Activated naive CD4-positive, alpha-beta T cell treated with anti-CD3 and anti-CD28 coated beads for 36 hours (primary cell): ENCODE measurements at regions of chr19 and their contacts with region 1.

Region 1: GRCh38 chr19:12333162-12334159 is at the start of gene ZNF563:
- DNase-seq: peak; percentile 100
- H3K4me3 Mint-ChIP-seq: peak within 1 kb of the TSS; percentile 97
- H3K27ac Mint-ChIP-seq: peak within 1 kb of the TSS; percentile 96
- H3K4me1 Mint-ChIP-seq: peaks cover 36% of the 10 kb centered on the region
- H3K27me3 Mint-ChIP-seq: no peaks in the 10 kb centered on the region
- total RNA-seq, gene ZNF563: 3.0 to 4.1 TPM

Region 2: GRCh38 chr19:12162882-12163806 is 170.3 kb before region 1 on chr19 and contains the start of gene ZNF136:
- CTCF ChIA-PET with region 1: no interaction called
- intact Hi-C with region 1: loop called (anchors 2 kb)
- DNase-seq: peak; percentile 99
- H3K4me3 Mint-ChIP-seq: peak within 1 kb of the TSS; percentile 90
- H3K27ac Mint-ChIP-seq: peak within 1 kb of the TSS; percentile 91
- H3K4me1 Mint-ChIP-seq: peaks cover 42% of the 10 kb centered on the region
- H3K27me3 Mint-ChIP-seq: no peaks in the 10 kb centered on the region
- total RNA-seq, gene ZNF136: 8.4 to 11.6 TPM

Region 3: GRCh38 chr19:12294249-12295158 is 39.0 kb before region 1 on chr19 and contains the start of gene ZNF44:
- CTCF ChIA-PET with region 1: interaction called, 6 read pairs
- intact Hi-C with region 1: loop called (anchors 1 kb)
- DNase-seq: peak; percentile 99
- H3K4me3 Mint-ChIP-seq: peak within 1 kb of the TSS; percentile 98
- H3K27ac Mint-ChIP-seq: peak within 1 kb of the TSS; percentile 96
- H3K4me1 Mint-ChIP-seq: peaks cover 31% of the 10 kb centered on the region
- H3K27me3 Mint-ChIP-seq: no peaks in the 10 kb centered on the region
- total RNA-seq, gene ZNF44: 5.9 to 6.3 TPM

Region 4: DNA sequence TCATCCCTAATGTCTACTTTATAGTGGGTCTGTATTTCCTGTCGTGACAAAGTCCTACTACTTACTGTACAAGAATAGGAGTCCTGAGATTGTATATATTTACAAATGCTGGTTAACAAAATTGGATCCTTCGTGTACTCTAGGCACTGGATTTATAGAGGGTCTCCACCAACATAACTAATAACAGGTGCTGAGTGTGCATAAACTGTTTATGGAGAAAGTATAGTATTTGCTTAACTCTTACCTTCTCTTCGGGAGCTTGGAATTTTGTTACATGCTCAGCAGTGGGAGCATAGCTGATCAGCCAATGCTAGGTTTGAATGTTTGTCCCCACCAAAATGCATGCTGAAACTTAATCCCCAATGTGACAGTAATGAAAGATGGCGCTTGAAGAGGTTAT is 19.9 kb after region 1 on chr19:
- CTCF ChIA-PET with region 1: no interaction called
- intact Hi-C with region 1: no loop called
- DNase-seq: no peak
- H3K4me3 Mint-ChIP-seq: no peak overlapping the region
- H3K27ac Mint-ChIP-seq: no peak overlapping the region
- H3K4me1 Mint-ChIP-seq: no peaks in the 10 kb centered on the region
- H3K27me3 Mint-ChIP-seq: no peaks in the 10 kb centered on the region

Region 5: DNA sequence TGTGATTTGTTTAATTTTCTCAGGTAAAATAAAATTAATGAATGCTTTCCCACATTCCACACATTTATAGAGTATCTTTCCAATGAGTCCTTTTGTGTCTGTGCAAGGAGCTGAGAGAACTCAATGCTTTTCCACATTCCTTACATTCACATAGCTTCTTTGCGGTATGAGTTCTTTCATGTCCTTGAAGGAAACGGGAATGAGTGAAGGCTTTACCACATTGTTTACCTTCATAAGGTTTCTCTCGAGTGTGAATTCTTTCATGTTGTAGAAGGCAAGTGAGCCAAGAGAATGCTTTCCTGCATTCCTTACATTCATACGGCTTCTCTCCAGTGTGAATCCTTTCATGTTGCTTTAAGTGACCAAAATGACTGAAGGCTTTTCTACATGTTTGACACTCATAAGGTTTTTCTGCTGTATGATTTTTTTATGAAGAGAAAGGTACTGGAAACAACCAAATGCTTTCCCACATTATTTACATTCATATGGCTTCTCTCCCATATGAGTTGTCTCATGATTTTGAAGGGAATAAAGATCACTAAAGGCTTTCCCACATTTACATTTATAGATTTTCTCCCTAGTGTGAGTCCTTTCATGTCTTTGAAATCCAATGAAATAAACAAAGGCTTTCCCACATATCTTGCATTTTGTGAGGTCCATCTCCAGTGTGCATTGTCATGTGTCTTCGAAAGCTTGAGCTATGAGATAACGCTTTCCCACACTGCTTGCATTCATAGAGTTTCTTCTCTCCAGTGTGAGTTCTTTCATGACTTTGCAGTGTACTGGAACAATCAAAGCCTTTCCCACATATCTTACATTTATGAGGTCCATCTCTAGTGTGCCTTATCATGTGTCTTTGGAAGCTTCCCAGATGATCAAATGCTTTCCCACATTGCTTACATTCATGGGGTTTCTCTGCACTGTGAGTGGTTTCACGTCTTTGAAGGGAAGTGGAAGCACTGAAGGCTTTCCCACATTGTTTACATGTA is 46.6 kb after region 1 on chr19:
- CTCF ChIA-PET with region 1: no interaction called
- intact Hi-C with region 1: no loop called
- DNase-seq: no peak
- H3K4me3 Mint-ChIP-seq: no peak overlapping the region
- H3K27ac Mint-ChIP-seq: no peak overlapping the region
- H3K4me1 Mint-ChIP-seq: no peaks in the 10 kb centered on the region
- H3K27me3 Mint-ChIP-seq: no peaks in the 10 kb centered on the region

Region 6: GRCh38 chr19:12400633-12401502 is 67.4 kb after region 1 on chr19 and contains the start of gene ZNF799:
- CTCF ChIA-PET with region 1: no interaction called
- intact Hi-C with region 1: loop called (anchors 2 kb)
- DNase-seq: peak; percentile 93
- H3K4me3 Mint-ChIP-seq: peak within 1 kb of the TSS; percentile 89
- H3K27ac Mint-ChIP-seq: peak within 1 kb of the TSS; percentile 56
- H3K4me1 Mint-ChIP-seq: peaks cover 8% of the 10 kb centered on the region
- H3K27me3 Mint-ChIP-seq: no peaks in the 10 kb centered on the region
- total RNA-seq, gene ZNF799: 3.3 to 3.6 TPM

Region 7: GRCh38 chr19:12495002-12495802 is 161.7 kb after region 1 on chr19:
- CTCF ChIA-PET with region 1: no interaction called
- intact Hi-C with region 1: loop called (anchors 5 kb)
- DNase-seq: peak; percentile 98
- H3K4me3 Mint-ChIP-seq: peak overlapping the region; percentile 87
- H3K27ac Mint-ChIP-seq: peak overlapping the region; percentile 89
- H3K4me1 Mint-ChIP-seq: peaks cover 9% of the 10 kb centered on the region
- H3K27me3 Mint-ChIP-seq: no peaks in the 10 kb centered on the region

Region 8: DNA sequence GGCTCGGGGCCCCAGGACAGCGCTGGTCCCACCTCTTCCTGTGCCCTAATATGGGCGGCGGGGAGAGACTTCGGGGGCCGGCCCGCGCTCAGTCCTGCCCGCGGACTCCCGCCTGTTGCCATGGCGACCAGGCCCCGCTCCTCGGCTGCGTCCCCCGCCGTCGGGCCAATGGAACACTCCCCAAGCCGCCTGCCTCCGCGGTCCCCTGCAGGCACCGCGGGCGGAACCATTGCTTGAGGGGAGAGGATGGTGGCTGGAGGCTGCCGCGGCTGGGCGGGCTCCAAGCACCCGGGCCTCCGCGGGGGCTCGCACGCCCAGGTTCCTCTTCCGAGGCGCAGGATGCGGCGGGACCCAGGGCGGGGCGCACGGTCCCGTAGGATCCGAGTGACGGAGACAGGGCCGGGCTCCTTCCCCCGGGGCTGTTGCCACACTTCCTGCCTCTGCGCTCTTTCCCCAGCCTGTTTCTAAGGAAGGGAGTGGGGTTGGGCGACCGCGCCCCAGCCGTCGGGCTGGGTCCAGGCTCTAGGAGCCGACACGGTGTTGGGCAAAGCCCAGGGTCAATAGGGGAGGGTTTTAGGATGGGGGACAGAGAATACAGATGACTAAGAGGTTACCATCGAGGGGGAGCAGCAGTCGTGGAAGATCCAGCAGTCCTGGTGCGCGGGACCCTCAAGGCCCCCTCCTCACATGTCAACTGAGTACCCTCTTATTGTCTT is 456.6 kb after region 1 on chr19:
- CTCF ChIA-PET with region 1: no interaction called
- intact Hi-C with region 1: loop called (anchors 2 kb)
- DNase-seq: peak; percentile 97
- H3K4me3 Mint-ChIP-seq: peak overlapping the region; percentile 97
- H3K27ac Mint-ChIP-seq: peak overlapping the region; percentile 96
- H3K4me1 Mint-ChIP-seq: peaks cover 25% of the 10 kb centered on the region
- H3K27me3 Mint-ChIP-seq: no peaks in the 10 kb centered on the region